Head of caudate nucleus (tissue), 42 donors: ENCODE measurements at regions of chr1 and their contacts with region 1.

Region 1: GRCh38 chr1:211323156-211324063 is 3.2 kb upstream of the TRAF5 start:
- DNase-seq: peak in 37 of 42 donors; percentile 22 to 85 (median 59)

Region 2: GRCh38 chr1:211514030-211514754 is 190.8 kb after region 1 on chr1:
- intact Hi-C with region 1: loop called (anchors 10 kb)
- DNase-seq: peak; percentile 66 to 92 (median 80)